Panc1 (cell line): ENCODE measurements at regions of chr5 and their contacts with region 1.

Region 1: GRCh38 chr5:58886315-58887207 is 303.7 kb downstream of the RAB3C start:
- DNase-seq: peak; percentile 43
- ATAC-seq: peak; percentile 91
- H3K4me3 ChIP-seq: no peak overlapping the region
- H3K27ac ChIP-seq: no peak overlapping the region
- H3K4me1 ChIP-seq: no peaks in the 10 kb centered on the region
- H3K27me3 ChIP-seq: no peaks in the 10 kb centered on the region
- CTCF ChIP-seq: peak; percentile 95

Region 2: GRCh38 chr5:57411982-57412381 is 1474.6 kb before region 1 on chr5:
- CTCF ChIA-PET with region 1: no interaction called
- POLR2A ChIA-PET with region 1: no interaction called
- in situ Hi-C with region 1: no loop called
- intact Hi-C with region 1: no loop called
- DNase-seq: no peak
- ATAC-seq: no peak
- H3K4me3 ChIP-seq: no peak overlapping the region
- H3K27ac ChIP-seq: peak overlapping the region; percentile 50; the same call in 1 of the 2 replicates
- H3K4me1 ChIP-seq: peaks cover 3% of the 10 kb centered on the region
- H3K27me3 ChIP-seq: no peaks in the 10 kb centered on the region
- CTCF ChIP-seq: no peak

Region 3: DNA sequence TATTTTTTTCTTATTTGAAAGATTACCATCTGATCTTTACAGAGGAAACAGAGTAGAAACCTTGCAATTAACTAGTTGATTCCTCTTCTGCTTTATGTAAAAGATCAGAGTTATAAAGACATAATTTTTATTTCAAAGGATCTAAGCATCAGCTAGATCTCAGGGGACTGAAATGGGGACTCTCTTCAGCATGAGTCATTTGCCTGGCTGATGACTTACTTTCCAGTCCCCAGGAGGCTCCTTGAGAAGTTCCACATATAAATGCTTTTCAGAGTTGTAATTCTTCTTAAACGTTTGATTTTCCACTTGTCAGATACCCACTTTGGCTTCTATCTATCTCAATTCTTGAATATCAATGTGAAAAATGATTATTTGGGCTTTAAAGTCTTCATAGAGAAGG is 85.7 kb after region 1 on chr5:
- CTCF ChIA-PET with region 1: interaction called, 15 read pairs
- POLR2A ChIA-PET with region 1: no interaction called
- in situ Hi-C with region 1: no loop called
- intact Hi-C with region 1: no loop called
- DNase-seq: no peak
- ATAC-seq: no peak
- H3K4me3 ChIP-seq: no peak overlapping the region
- H3K27ac ChIP-seq: no peak overlapping the region
- H3K4me1 ChIP-seq: no peaks in the 10 kb centered on the region
- H3K27me3 ChIP-seq: no peaks in the 10 kb centered on the region; the same call in 1 of the 2 replicates
- CTCF ChIP-seq: no peak

Region 4: GRCh38 chr5:59007460-59008063 is 121.0 kb after region 1 on chr5:
- CTCF ChIA-PET with region 1: no interaction called
- POLR2A ChIA-PET with region 1: no interaction called
- in situ Hi-C with region 1: no loop called
- intact Hi-C with region 1: loop called (anchors 1 kb)
- DNase-seq: no peak
- ATAC-seq: no peak
- H3K4me3 ChIP-seq: no peak overlapping the region
- H3K27ac ChIP-seq: no peak overlapping the region
- H3K4me1 ChIP-seq: no peaks in the 10 kb centered on the region
- H3K27me3 ChIP-seq: no peaks in the 10 kb centered on the region; the same call in 1 of the 2 replicates
- CTCF ChIP-seq: peak; percentile 51; the same call in 1 of the 2 replicates

Region 5: GRCh38 chr5:59174248-59174844 is 287.8 kb after region 1 on chr5:
- CTCF ChIA-PET with region 1: interaction called, 3 read pairs
- POLR2A ChIA-PET with region 1: no interaction called
- in situ Hi-C with region 1: no loop called
- intact Hi-C with region 1: loop called (anchors 5 kb)
- DNase-seq: no peak
- ATAC-seq: peak; percentile 90
- H3K4me3 ChIP-seq: no peak overlapping the region
- H3K27ac ChIP-seq: no peak overlapping the region
- H3K4me1 ChIP-seq: no peaks in the 10 kb centered on the region
- H3K27me3 ChIP-seq: no peaks in the 10 kb centered on the region
- CTCF ChIP-seq: peak; percentile 75; the same call in 1 of the 2 replicates